HepG2 (cell line): ENCODE measurements at regions of chr9 and their contacts with region 1.

Region 1: DNA sequence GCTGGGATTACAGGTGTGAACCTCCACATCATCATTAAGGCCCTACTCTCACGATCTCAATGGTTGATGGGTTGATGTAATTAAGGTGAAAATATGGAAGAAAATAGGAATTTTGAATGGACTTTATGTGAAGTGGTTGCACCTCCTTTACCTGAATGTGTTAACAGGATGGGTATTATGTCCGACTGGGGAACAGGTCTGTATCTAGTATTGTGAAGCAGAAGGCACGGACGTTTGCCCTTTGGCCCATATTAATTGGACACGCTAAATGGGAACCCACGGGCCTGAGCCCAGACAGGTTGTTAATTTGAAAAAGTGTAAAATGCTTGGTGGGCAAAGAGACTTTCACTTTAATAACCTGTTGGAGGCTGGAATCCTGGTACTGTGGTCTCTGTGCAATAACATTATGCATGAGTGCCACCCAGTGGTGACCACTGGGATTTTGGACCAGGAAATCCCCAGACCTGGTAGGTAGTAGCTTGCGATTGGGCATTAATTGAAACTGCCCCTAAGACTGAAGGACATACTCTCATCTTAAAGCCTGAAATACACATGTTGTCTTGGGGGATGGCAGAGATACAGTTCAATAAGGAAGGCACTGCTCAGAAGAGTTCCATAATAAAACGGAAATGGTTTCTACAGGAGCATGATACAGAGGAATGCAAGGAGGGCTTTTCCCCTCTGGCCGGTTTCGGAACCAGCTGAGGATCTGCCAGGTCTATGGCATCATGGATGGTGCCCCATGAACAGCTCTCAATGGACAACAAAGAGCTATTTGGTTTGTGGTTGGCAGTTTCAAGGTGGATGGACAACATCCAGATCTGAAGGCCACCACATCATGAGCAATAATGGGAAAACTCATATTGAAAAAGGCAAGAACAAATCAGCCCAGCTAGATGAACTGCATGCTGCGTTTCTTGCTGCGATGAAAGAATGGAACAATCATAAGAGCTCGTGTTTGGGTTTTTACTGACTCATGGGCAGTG is 26.2 kb upstream of the BICD2 start:
- DNase-seq: peak; percentile 68
- ATAC-seq: peak; percentile 95
- H3K4me3 ChIP-seq: no peak overlapping the region
- H3K27ac ChIP-seq: no peak overlapping the region
- H3K4me1 ChIP-seq: peaks cover 8% of the 10 kb centered on the region
- H3K27me3 ChIP-seq: peaks cover 0 to 7% of the 10 kb centered on the region in 2 experiments; a peak in 3 of 5 replicates
- CTCF ChIP-seq: peak; percentile 90
- EP300 ChIP-seq: no peak
- POLR2A ChIP-seq: no peak
- RAD21 ChIP-seq: peak; percentile 79

Region 2: GRCh38 chr9:92716557-92716956 is 74.3 kb before region 1 on chr9:
- CTCF ChIA-PET with region 1: interaction called, 41 read pairs
- POLR2A ChIA-PET with region 1: no interaction called
- in situ Hi-C with region 1: loop called (anchors 5 kb)
- intact Hi-C with region 1: loop called (anchors 1 kb)
- DNase-seq: peak; percentile 47
- ATAC-seq: peak; percentile 89
- H3K4me3 ChIP-seq: no peak overlapping the region
- H3K27ac ChIP-seq: no peak overlapping the region
- H3K4me1 ChIP-seq: no peaks in the 10 kb centered on the region
- H3K27me3 ChIP-seq: no peaks in the 10 kb centered on the region
- CTCF ChIP-seq: peak; percentile 91
- EP300 ChIP-seq: no peak
- POLR2A ChIP-seq: no peak
- RAD21 ChIP-seq: peak; percentile 68

Region 3: GRCh38 chr9:92728831-92729734 is 61.8 kb before region 1 on chr9:
- CTCF ChIA-PET with region 1: interaction called, 15 read pairs
- POLR2A ChIA-PET with region 1: no interaction called
- in situ Hi-C with region 1: no loop called
- intact Hi-C with region 1: loop called (anchors 1 kb)
- DNase-seq: peak; percentile 16
- ATAC-seq: peak; percentile 86
- H3K4me3 ChIP-seq: no peak overlapping the region
- H3K27ac ChIP-seq: no peak overlapping the region
- H3K4me1 ChIP-seq: peaks cover 13% of the 10 kb centered on the region; the same call in 1 of the 2 replicates
- H3K27me3 ChIP-seq: no peaks in the 10 kb centered on the region
- CTCF ChIP-seq: peak; percentile 65
- EP300 ChIP-seq: no peak
- POLR2A ChIP-seq: no peak
- RAD21 ChIP-seq: peak; percentile 65

Region 4: GRCh38 chr9:92764988-92765936 is 25.6 kb before region 1 on chr9:
- CTCF ChIA-PET with region 1: interaction called, 13 read pairs
- POLR2A ChIA-PET with region 1: no interaction called
- in situ Hi-C with region 1: no loop called
- intact Hi-C with region 1: loop called (anchors 1 kb)
- DNase-seq: peak; percentile 92
- ATAC-seq: peak; percentile 95
- H3K4me3 ChIP-seq: peak overlapping the region; percentile 75 to 90 (median 88)
- H3K27ac ChIP-seq: peak overlapping the region; percentile 97
- H3K4me1 ChIP-seq: peaks cover 49% of the 10 kb centered on the region
- H3K27me3 ChIP-seq: peaks cover 0 to 3% of the 10 kb centered on the region in 2 experiments; a peak in 1 of 5 replicates
- CTCF ChIP-seq: peak; percentile 92
- EP300 ChIP-seq: no peak
- POLR2A ChIP-seq: peak in 1 of 2 experiments; percentile 64; a peak in 1 of 4 replicates
- RAD21 ChIP-seq: peak; percentile 66; the same call in 1 of the 2 replicates

Region 5: DNA sequence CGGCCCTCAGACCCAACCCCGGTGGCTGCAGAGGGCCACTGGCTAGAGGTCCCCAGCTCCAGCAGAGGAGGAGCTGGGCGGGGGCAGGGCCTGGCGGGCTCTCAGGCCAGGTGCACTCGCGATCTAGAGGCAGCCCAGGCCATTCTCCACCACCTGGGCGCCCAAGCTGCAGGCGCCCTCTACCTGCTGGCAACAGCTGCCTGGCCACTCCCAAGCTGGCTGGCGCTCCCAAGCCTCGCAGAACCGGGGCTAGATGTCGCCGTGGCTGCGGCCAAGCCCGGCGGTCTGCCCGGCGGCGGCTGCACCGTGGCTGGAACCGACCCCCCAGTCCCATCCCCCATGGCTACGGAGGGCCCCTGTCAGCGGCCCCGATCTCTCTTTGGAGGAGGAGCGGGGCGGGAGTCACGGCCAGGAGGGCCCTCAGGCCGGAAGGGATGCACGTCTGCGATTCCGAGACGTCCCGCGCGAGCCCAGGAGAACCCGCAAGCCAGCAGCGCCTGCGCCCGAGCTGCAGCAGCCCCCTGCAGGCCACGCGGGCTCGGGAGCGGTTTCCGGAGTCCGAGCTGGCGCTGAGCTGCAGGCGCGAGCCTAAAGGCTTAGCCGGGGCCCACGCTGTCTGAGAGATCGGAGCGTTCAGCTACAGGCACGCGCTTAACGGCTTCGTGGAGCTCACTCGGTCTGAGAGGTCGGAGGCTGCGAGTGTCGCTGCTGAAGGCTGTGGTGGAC is 18.1 kb after region 1 on chr9:
- CTCF ChIA-PET with region 1: no interaction called
- POLR2A ChIA-PET with region 1: no interaction called
- in situ Hi-C with region 1: no loop called
- intact Hi-C with region 1: no loop called
- DNase-seq: peak; percentile 17
- ATAC-seq: peak; percentile 83
- H3K4me3 ChIP-seq: peak overlapping the region in 1 of 3 experiments; percentile 54; a peak in 1 of 6 replicates
- H3K27ac ChIP-seq: no peak overlapping the region
- H3K4me1 ChIP-seq: peaks cover 8% of the 10 kb centered on the region; the same call in 1 of the 2 replicates
- H3K27me3 ChIP-seq: peaks cover 7 to 52% of the 10 kb centered on the region in 2 experiments; a peak in 4 of 5 replicates
- CTCF ChIP-seq: peak; percentile 32
- EP300 ChIP-seq: no peak
- POLR2A ChIP-seq: no peak
- RAD21 ChIP-seq: peak; percentile 25; the same call in 1 of the 2 replicates

Region 6: DNA sequence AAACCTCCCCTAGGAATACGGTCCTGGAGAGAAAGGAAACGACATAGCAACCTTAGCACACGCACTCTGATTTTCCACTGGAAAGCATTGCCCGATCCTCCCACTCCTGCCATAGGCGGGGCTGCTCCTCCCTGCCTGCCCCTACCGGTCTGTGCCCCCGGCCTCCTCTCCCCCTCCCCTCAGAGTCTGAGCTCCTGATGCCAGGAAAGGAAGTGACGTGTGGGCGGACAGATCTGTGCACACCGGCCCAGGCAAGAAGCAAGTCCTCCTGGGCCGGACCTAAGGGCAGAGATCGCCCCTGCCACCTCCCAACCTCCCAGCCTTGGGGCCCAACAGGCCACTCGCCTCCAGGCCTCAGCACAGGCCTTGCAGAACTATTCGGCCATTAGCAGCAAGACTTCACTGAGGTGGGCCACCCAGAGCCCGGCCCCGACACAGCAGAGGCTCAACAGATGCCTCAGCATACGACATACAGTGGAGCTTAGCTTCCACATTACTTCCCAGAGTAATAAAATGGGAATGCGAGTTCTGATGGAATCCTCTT is 336.1 kb after region 1 on chr9:
- CTCF ChIA-PET with region 1: no interaction called
- POLR2A ChIA-PET with region 1: no interaction called
- in situ Hi-C with region 1: no loop called
- intact Hi-C with region 1: no loop called
- DNase-seq: peak; percentile 88
- ATAC-seq: peak; percentile 81
- H3K4me3 ChIP-seq: peak overlapping the region in 1 of 3 experiments; percentile 56; a peak in 2 of 6 replicates
- H3K27ac ChIP-seq: peak overlapping the region; percentile 92
- H3K4me1 ChIP-seq: peaks cover 61% of the 10 kb centered on the region
- H3K27me3 ChIP-seq: no peaks in the 10 kb centered on the region
- CTCF ChIP-seq: peak; percentile 19; the same call in 1 of the 2 replicates
- EP300 ChIP-seq: no peak; a peak in 1 of 4 replicates
- POLR2A ChIP-seq: peak in 1 of 2 experiments; percentile 49; a peak in 1 of 4 replicates
- RAD21 ChIP-seq: peak; percentile 41; the same call in 1 of the 2 replicates